PC-9 (cell line): ENCODE measurements at regions of chr9 and their contacts with region 1.

Region 1: GRCh38 chr9:19193029-19193324 is 37.5 kb upstream of the DENND4C start:
- DNase-seq: peak in 1 of 2 experiments; percentile 40
- H3K4me3 ChIP-seq: no peak overlapping the region
- H3K27ac ChIP-seq: no peak overlapping the region
- H3K4me1 ChIP-seq: peaks cover 11% of the 10 kb centered on the region
- H3K27me3 ChIP-seq: no peaks in the 10 kb centered on the region
- CTCF ChIP-seq: no peak

Region 2: DNA sequence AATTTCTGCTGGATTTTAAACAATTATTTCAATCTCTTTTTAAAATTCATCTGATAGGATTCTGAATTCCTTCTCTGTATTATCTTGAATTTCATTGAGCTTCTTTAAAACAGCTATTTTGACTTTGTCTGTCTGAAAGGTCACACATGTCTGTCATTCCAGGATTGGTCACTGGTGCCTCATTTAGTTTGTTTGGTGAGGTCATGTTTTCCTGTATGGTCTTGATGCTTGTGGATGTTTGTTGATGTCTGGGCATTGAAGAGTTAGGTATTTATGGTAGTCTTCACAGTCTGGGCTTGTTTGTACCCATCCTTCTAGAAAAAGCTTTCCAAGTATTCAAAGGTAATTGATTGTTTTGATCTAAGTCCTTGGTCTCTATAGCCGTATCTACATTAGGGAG is 76.6 kb after region 1 on chr9:
- CTCF ChIA-PET with region 1: no interaction called
- POLR2A ChIA-PET with region 1: interaction called, 15 read pairs
- intact Hi-C with region 1: no loop called
- DNase-seq: no peak
- H3K4me3 ChIP-seq: no peak overlapping the region
- H3K27ac ChIP-seq: no peak overlapping the region
- H3K4me1 ChIP-seq: no peaks in the 10 kb centered on the region
- H3K27me3 ChIP-seq: no peaks in the 10 kb centered on the region
- CTCF ChIP-seq: no peak